ENCODE measurements at regions of chr20 and their contacts with region 1.

Region 1: GRCh38 chr20:34022154-34022838 is 28.6 kb downstream of the RALY start:
- DNase-seq: no peak
- H3K4me3 ChIP-seq: no peak overlapping the region
- H3K27ac ChIP-seq: no peak overlapping the region
- H3K4me1 ChIP-seq: peaks cover 2 to 15% (median 9%) of the 10 kb centered on the region in 4 experiments; a peak in 5 of 7 replicates
- H3K27me3 ChIP-seq: no peaks in the 10 kb centered on the region
- CTCF ChIP-seq: peak in 2 of 3 experiments; percentile 43 to 48; a peak in 2 of 4 replicates
- EP300 ChIP-seq: no peak
- POLR2A ChIP-seq: no peak
- RAD21 ChIP-seq: peak; percentile 58 to 73

Region 2: GRCh38 chr20:34037121-34037520 is 14.8 kb after region 1 on chr20:
- CTCF ChIA-PET with region 1: interaction called, 11 read pairs
- POLR2A ChIA-PET with region 1: no interaction called
- DNase-seq: no peak
- H3K4me3 ChIP-seq: no peak overlapping the region
- H3K27ac ChIP-seq: no peak overlapping the region
- H3K4me1 ChIP-seq: peaks cover 3 to 14% (median 8%) of the 10 kb centered on the region in 4 experiments; a peak in 5 of 7 replicates
- H3K27me3 ChIP-seq: no peaks in the 10 kb centered on the region
- CTCF ChIP-seq: no peak
- EP300 ChIP-seq: no peak
- POLR2A ChIP-seq: no peak
- RAD21 ChIP-seq: no peak

Measured in H1 (cell line).